ENCODE measurements at regions of chr4 and their contacts with region 1.

Region 1: GRCh38 chr4:110005461-110006056 is 92.9 kb downstream of the EGF start:
- DNase-seq: peak; percentile 62
- H3K4me3 ChIP-seq: no peak overlapping the region
- H3K27ac ChIP-seq: no peak overlapping the region
- H3K4me1 ChIP-seq: no peaks in the 10 kb centered on the region
- H3K27me3 ChIP-seq: peaks cover 7 to 10% of the 10 kb centered on the region in 2 experiments
- CTCF ChIP-seq: peak; percentile 46 to 52
- POLR2A ChIP-seq: no peak

Region 2: GRCh38 chr4:110020139-110020538 is 14.6 kb after region 1 on chr4:
- CTCF ChIA-PET with region 1: interaction called, 5 read pairs
- POLR2A ChIA-PET with region 1: no interaction called
- dilution Hi-C with region 1: no loop called
- intact Hi-C with region 1: loop called (anchors 1 kb)
- DNase-seq: no peak
- H3K4me3 ChIP-seq: no peak overlapping the region
- H3K27ac ChIP-seq: no peak overlapping the region
- H3K4me1 ChIP-seq: no peaks in the 10 kb centered on the region
- H3K27me3 ChIP-seq: peaks cover 10 to 14% of the 10 kb centered on the region in 2 experiments
- CTCF ChIP-seq: no peak
- POLR2A ChIP-seq: no peak

Region 3: DNA sequence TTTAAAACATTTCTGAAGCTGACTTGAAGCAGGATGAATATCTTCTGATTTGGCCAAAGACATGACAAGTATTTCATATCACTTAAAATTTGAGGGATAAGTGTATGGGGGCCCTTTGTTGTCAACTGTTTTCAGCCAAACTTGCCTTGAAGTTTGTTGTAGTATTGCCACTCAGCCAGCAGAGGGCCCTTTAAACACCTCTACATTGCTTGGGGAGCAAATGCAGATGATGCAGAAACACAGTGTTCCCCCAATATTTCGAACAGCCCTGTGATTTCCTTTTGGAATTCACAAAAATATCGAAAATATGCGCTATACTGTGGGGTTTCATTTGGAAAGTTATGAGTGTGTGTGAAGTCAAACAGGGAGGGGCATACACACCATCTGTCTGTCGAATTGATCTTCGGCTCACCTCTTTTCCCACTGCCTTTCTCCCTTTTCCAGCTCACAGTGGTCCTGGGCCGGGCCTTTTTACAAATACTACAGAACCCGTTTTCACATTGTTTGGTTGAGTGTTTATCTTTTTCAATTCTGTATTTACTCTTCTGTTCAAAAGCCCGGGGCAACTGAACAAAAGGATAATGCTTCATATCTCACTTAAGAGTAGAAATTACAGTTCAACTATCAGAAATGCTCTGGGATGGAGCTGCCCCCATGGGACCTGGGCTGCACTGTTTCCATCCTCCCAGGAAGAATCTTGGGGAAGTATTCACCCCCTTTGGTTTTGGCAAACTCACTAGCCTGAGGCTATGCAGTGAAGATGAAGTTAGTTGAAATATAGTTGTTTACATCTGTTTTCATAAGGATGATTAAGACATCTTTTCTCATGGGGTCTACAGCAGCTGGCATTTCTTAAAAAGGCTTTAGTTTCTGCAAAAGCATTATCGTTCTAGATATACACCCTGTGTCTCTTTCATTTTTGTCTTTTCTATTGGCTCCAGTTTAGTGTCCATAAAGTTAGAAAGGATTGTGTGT is 44.7 kb after region 1 on chr4:
- CTCF ChIA-PET with region 1: no interaction called
- POLR2A ChIA-PET with region 1: no interaction called
- dilution Hi-C with region 1: no loop called
- intact Hi-C with region 1: no loop called
- DNase-seq: peak; percentile 46
- H3K4me3 ChIP-seq: no peak overlapping the region
- H3K27ac ChIP-seq: no peak overlapping the region
- H3K4me1 ChIP-seq: no peaks in the 10 kb centered on the region
- H3K27me3 ChIP-seq: no peaks in the 10 kb centered on the region
- CTCF ChIP-seq: peak; percentile 68 to 75
- POLR2A ChIP-seq: no peak

Region 4: GRCh38 chr4:110124711-110125110 is 119.2 kb after region 1 on chr4:
- CTCF ChIA-PET with region 1: no interaction called
- POLR2A ChIA-PET with region 1: no interaction called
- dilution Hi-C with region 1: no loop called
- intact Hi-C with region 1: no loop called
- DNase-seq: no peak
- H3K4me3 ChIP-seq: no peak overlapping the region
- H3K27ac ChIP-seq: no peak overlapping the region
- H3K4me1 ChIP-seq: peaks cover 10% of the 10 kb centered on the region
- H3K27me3 ChIP-seq: no peaks in the 10 kb centered on the region
- CTCF ChIP-seq: no peak
- POLR2A ChIP-seq: no peak

Region 5: DNA sequence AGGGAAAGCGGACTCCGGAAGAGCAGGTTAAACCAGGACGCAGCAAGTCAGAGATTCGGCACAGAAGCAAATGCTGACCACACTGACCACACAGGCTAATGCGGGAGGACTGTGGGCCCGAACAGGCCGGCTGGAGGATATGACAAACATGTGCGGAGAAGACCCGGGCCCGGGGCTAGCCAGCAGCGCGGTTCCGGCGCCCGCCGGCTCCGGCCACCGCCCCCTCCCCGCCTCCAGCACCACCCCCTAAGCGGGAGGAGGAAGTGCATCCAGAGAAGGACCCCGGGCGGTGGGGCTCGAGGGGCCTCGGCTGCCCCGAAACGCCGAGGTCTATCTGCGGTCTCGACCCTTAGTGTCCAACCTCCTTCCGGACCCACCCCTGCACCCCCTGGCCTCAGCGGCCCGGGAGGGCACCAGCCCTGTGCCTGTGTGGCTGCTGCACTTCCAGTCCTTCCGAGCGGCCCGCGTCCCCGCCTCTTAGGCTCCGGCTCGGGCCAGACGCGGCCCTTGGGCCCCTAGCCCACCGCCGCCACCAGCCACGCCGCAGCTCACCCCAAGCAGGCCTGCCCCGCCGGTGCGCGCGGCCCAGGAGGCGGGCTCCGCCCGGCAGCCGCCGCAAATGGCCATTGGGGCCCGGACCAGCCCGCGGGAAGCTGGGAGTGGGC is 190.8 kb after region 1 on chr4:
- CTCF ChIA-PET with region 1: interaction called, 7 read pairs
- POLR2A ChIA-PET with region 1: no interaction called
- dilution Hi-C with region 1: no loop called
- intact Hi-C with region 1: loop called (anchors 5 kb)
- DNase-seq: peak; percentile 55
- H3K4me3 ChIP-seq: peak overlapping the region; percentile 78 to 95 (median 91)
- H3K27ac ChIP-seq: peak overlapping the region; percentile 46
- H3K4me1 ChIP-seq: peaks cover 23% of the 10 kb centered on the region
- H3K27me3 ChIP-seq: no peaks in the 10 kb centered on the region
- CTCF ChIP-seq: no peak
- POLR2A ChIP-seq: peak; percentile 20

Region 6: GRCh38 chr4:110211007-110211769 is 205.6 kb after region 1 on chr4:
- CTCF ChIA-PET with region 1: interaction called, 5 read pairs
- POLR2A ChIA-PET with region 1: no interaction called
- dilution Hi-C with region 1: no loop called
- intact Hi-C with region 1: loop called (anchors 1 kb)
- DNase-seq: peak; percentile 46
- H3K4me3 ChIP-seq: no peak overlapping the region
- H3K27ac ChIP-seq: no peak overlapping the region
- H3K4me1 ChIP-seq: no peaks in the 10 kb centered on the region
- H3K27me3 ChIP-seq: peaks cover 0 to 3% of the 10 kb centered on the region in 2 experiments
- CTCF ChIP-seq: peak; percentile 59 to 69
- POLR2A ChIP-seq: no peak

Region 7: GRCh38 chr4:110310795-110311194 is 305.2 kb after region 1 on chr4:
- CTCF ChIA-PET with region 1: interaction called, 5 read pairs
- POLR2A ChIA-PET with region 1: no interaction called
- dilution Hi-C with region 1: no loop called
- intact Hi-C with region 1: loop called (anchors 1 kb)
- DNase-seq: no peak
- H3K4me3 ChIP-seq: no peak overlapping the region
- H3K27ac ChIP-seq: no peak overlapping the region
- H3K4me1 ChIP-seq: no peaks in the 10 kb centered on the region
- H3K27me3 ChIP-seq: no peaks in the 10 kb centered on the region
- CTCF ChIP-seq: no peak
- POLR2A ChIP-seq: no peak

Region 8: GRCh38 chr4:110510955-110511544 is 505.5 kb after region 1 on chr4:
- CTCF ChIA-PET with region 1: interaction called, 527 read pairs
- POLR2A ChIA-PET with region 1: no interaction called
- dilution Hi-C with region 1: no loop called
- intact Hi-C with region 1: loop called (anchors 1 kb)
- DNase-seq: peak; percentile 57
- H3K4me3 ChIP-seq: no peak overlapping the region
- H3K27ac ChIP-seq: no peak overlapping the region
- H3K4me1 ChIP-seq: peaks cover 10% of the 10 kb centered on the region
- H3K27me3 ChIP-seq: no peaks in the 10 kb centered on the region
- CTCF ChIP-seq: peak; percentile 31 to 40
- POLR2A ChIP-seq: no peak